CD14-positive monocyte (primary cell): ENCODE measurements at regions of chr4 and their contacts with region 1.

Region 1: GRCh38 chr4:140743194-140743931 is 12.8 kb downstream of the TBC1D9 start:
- DNase-seq: peak; percentile 63 to 79 (median 71)
- H3K4me3 ChIP-seq: peak overlapping the region in 1 of 3 experiments; percentile 34
- H3K4me3 Mint-ChIP-seq: peak overlapping the region in 1 of 2 donors; percentile 83
- H3K27ac ChIP-seq: peak overlapping the region; percentile 5 to 84
- H3K27ac Mint-ChIP-seq: peak overlapping the region; percentile 85 to 97 (median 96)
- H3K4me1 ChIP-seq: peaks cover 20 to 25% of the 10 kb centered on the region in 2 donors
- H3K4me1 Mint-ChIP-seq: peaks cover 33% of the 10 kb centered on the region
- H3K27me3 ChIP-seq: no peaks in the 10 kb centered on the region
- H3K27me3 Mint-ChIP-seq: peaks cover 4 to 5% (median 5%) of the 10 kb centered on the region in 3 donors
- CTCF ChIP-seq: peak; percentile 32

Region 2: DNA sequence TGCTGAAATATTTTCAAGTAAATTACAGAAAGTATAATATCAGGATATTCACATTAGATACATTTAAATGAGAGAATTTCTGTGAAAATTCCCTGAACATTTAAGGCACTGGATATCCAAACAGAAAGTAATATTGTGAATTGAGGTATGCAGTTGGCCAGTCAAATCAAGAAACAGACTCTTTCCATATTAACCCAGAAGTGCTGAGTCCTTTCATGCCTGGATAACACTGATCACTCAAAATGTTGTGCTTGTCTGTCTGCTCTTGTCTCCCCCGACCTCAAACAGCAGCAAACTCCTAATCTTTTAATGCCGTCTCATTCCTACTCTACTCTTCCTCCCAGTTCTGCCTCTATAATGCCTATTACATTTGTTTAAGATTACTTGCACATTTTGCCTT is 38.4 kb before region 1 on chr4:
- intact Hi-C with region 1: loop called in 1 of 2 experiments (anchors 5 kb)
- DNase-seq: no peak
- H3K4me3 ChIP-seq: no peak overlapping the region
- H3K4me3 Mint-ChIP-seq: no peak overlapping the region
- H3K27ac ChIP-seq: no peak overlapping the region
- H3K27ac Mint-ChIP-seq: no peak overlapping the region
- H3K4me1 ChIP-seq: peaks cover 15 to 29% of the 10 kb centered on the region in 2 donors
- H3K4me1 Mint-ChIP-seq: peaks cover 36% of the 10 kb centered on the region
- H3K27me3 ChIP-seq: no peaks in the 10 kb centered on the region
- H3K27me3 Mint-ChIP-seq: no peaks in the 10 kb centered on the region
- CTCF ChIP-seq: no peak